CD8-positive, alpha-beta T cell (primary cell): ENCODE measurements at regions of chr9 and their contacts with region 1.

Region 1: GRCh38 chr9:37800631-37801286 is at the start of gene DCAF10:
- DNase-seq: peak; percentile 81 to 95 (median 88)
- ATAC-seq: peak; percentile 86
- H3K4me3 ChIP-seq: peak within 1 kb of the TSS; percentile 83 to 97
- H3K4me3 Mint-ChIP-seq: peak within 1 kb of the TSS; percentile 94
- H3K27ac ChIP-seq: peak within 1 kb of the TSS; percentile 69 to 77
- H3K27ac Mint-ChIP-seq: peak within 1 kb of the TSS; percentile 86
- H3K4me1 ChIP-seq: peaks cover 27% of the 10 kb centered on the region
- H3K4me1 Mint-ChIP-seq: peaks cover 40% of the 10 kb centered on the region
- H3K27me3 ChIP-seq: no peaks in the 10 kb centered on the region
- H3K27me3 Mint-ChIP-seq: no peaks in the 10 kb centered on the region
- CTCF ChIP-seq: no peak
- total RNA-seq, gene DCAF10: 4.9 to 5.6 TPM

Region 2: DNA sequence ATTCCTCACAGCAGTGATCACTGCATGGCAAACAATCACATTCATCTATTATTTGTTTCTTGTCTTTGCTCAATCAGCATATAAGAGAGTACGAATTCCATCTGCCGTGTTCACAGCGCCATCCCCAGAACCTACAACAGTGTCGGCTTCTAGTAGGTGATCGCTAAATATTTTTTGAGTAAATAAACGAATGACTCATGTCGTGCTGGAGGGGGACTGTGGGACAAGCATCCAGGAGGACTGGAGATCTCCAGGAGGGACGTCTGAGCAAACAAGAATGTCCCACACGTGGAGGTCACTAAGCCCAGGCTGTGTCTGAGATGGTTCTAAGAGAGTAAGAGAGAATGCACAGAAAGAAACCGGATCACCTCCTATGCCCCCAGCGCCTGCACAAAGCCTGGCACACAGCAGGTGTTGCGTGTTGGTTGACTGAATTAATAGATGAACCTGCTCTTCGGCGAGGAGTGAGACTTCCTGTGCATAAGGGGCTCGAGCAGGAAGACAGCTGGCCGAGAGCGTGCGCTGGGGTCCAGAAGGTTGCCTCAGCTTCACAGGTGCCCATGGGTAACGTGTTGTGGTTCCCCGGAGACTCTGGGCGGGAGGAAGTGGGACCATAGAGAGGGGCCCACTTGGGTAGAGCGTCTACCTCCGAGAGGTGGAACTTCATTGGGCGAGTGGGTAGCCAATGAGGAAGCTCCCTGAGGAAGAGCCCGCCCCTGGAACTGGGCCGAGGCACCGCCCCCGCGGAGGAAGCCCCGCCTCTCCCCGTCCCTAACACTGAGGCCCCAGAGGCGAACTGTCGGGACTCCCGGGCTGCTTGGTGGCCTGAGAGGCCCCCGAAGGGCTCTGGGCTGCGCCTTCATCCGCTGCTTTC is 1035.1 kb before region 1 on chr9:
- CTCF ChIA-PET with region 1: no interaction called
- POLR2A ChIA-PET with region 1: no interaction called
- intact Hi-C with region 1: loop called in 1 of 2 experiments (anchors 5 kb)
- DNase-seq: peak; percentile 68 to 95 (median 89)
- ATAC-seq: peak; percentile 99
- H3K4me3 ChIP-seq: peak overlapping the region; percentile 47 to 54
- H3K4me3 Mint-ChIP-seq: no peak overlapping the region
- H3K27ac ChIP-seq: peak overlapping the region; percentile 23 to 39
- H3K27ac Mint-ChIP-seq: peak overlapping the region; percentile 71
- H3K4me1 ChIP-seq: peaks cover 6% of the 10 kb centered on the region
- H3K4me1 Mint-ChIP-seq: peaks cover 6% of the 10 kb centered on the region
- H3K27me3 ChIP-seq: peaks cover 0 to 7% of the 10 kb centered on the region in 2 experiments
- H3K27me3 Mint-ChIP-seq: peaks cover 5% of the 10 kb centered on the region
- CTCF ChIP-seq: no peak

Region 3: GRCh38 chr9:37465249-37466036 is 335.3 kb before region 1 on chr9 and contains the start of gene ZBTB5:
- CTCF ChIA-PET with region 1: no interaction called
- POLR2A ChIA-PET with region 1: no interaction called
- intact Hi-C with region 1: loop called in 1 of 2 experiments (anchors 5 kb)
- DNase-seq: peak; percentile 97 to 100 (median 99)
- ATAC-seq: peak; percentile 79
- H3K4me3 ChIP-seq: peak within 1 kb of the TSS; percentile 91 to 97
- H3K4me3 Mint-ChIP-seq: peak within 1 kb of the TSS; percentile 95
- H3K27ac ChIP-seq: peak within 1 kb of the TSS; percentile 86 to 97
- H3K27ac Mint-ChIP-seq: peak within 1 kb of the TSS; percentile 98
- H3K4me1 ChIP-seq: peaks cover 23% of the 10 kb centered on the region
- H3K4me1 Mint-ChIP-seq: peaks cover 40% of the 10 kb centered on the region
- H3K27me3 ChIP-seq: no peaks in the 10 kb centered on the region
- H3K27me3 Mint-ChIP-seq: no peaks in the 10 kb centered on the region
- CTCF ChIP-seq: no peak
- total RNA-seq, gene ZBTB5: 18.5 to 18.7 TPM

Region 4: DNA sequence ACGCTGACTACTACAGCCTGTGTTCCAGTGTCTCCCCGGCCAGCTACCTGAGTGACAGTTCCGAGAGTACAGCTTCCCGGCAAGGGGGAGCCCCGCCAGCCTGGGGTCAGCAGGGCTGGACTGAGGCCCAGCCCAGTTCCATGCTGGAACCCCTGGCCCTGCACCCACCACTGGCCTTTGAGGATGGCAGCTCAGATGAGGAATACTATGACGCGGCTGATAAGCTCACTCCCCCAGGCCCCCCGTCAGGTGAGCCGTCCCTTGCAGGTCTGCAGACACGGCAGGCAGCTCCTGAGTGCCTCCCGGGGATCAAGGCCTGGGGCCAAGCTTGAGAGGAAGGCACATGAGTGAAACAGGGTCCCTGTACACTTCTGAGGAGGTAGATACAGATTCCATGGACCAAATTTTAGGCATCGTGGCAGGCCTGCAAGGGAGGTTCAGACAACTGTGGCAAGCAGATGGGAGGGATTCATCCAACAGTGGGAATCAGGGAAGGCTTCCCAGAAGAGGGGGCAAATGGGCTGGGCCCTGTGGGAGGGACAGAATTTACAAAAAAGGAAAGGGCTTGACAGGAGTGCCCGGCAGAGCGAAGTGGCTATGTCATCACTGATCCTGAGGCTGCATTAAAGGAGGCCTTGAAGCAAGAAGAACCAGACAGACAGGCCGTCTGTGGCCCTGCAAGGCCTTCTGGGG is 60.0 kb before region 1 on chr9:
- CTCF ChIA-PET with region 1: no interaction called
- POLR2A ChIA-PET with region 1: no interaction called
- intact Hi-C with region 1: no loop called
- DNase-seq: no peak
- ATAC-seq: no peak
- H3K4me3 ChIP-seq: no peak overlapping the region
- H3K4me3 Mint-ChIP-seq: no peak overlapping the region
- H3K27ac ChIP-seq: no peak overlapping the region
- H3K27ac Mint-ChIP-seq: no peak overlapping the region
- H3K4me1 ChIP-seq: no peaks in the 10 kb centered on the region
- H3K4me1 Mint-ChIP-seq: no peaks in the 10 kb centered on the region
- H3K27me3 ChIP-seq: no peaks in the 10 kb centered on the region
- H3K27me3 Mint-ChIP-seq: no peaks in the 10 kb centered on the region
- CTCF ChIP-seq: no peak

Region 5: DNA sequence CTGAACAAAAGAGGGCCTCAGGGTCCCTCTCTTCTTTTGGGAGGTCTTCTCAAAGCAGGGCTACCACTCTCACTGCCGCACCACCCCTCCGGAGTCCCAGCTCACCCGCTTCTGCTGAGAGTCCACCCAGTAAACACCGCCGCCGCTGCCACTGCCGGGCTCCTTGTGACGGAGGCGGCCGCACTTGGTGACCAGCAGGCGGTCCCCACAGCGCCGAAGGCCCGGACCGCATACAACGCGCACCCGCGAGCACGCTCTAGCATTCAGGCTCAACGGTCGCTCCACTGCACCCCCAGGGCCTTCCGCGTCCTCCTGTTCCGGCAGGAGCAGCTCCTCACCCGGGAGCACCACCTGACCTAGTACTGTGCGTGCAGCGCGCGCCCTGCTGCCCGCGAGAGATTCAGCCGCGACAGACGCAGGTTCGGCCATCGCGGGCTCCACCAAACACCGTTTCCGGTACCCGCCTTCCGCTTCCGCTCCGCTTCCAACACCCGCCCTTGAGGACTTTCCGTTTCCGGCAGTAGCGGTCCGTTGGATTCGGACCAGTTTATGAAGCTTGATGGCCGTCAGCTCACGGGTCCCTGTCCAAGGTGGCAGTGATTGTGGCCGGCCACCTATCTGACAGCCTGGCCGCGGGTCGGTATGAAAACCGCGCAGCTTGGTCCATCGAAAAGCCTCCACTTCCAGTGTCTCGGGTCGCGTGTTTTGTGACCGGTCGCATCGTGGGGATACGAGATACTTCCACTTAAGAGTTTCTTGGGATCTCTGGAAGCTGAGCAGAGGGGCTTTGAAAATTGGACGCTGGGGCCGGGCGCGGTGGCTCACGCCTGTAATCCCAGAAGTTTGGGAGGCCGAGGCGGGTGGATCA is 15.9 kb before region 1 on chr9 and contains the start of gene EXOSC3:
- CTCF ChIA-PET with region 1: interaction called, 3 read pairs
- POLR2A ChIA-PET with region 1: interaction called, 30 read pairs
- intact Hi-C with region 1: loop called (anchors 1 kb)
- DNase-seq: peak; percentile 58 to 92 (median 84)
- ATAC-seq: peak; percentile 83
- H3K4me3 ChIP-seq: peak within 1 kb of the TSS; percentile 98
- H3K4me3 Mint-ChIP-seq: peak within 1 kb of the TSS; percentile 97
- H3K27ac ChIP-seq: peak within 1 kb of the TSS; percentile 75 to 88
- H3K27ac Mint-ChIP-seq: peak within 1 kb of the TSS; percentile 96
- H3K4me1 ChIP-seq: peaks cover 24% of the 10 kb centered on the region
- H3K4me1 Mint-ChIP-seq: peaks cover 42% of the 10 kb centered on the region
- H3K27me3 ChIP-seq: no peaks in the 10 kb centered on the region
- H3K27me3 Mint-ChIP-seq: peaks cover 4% of the 10 kb centered on the region
- CTCF ChIP-seq: no peak
- total RNA-seq, gene EXOSC3: 34.2 to 45.9 TPM

Region 6: DNA sequence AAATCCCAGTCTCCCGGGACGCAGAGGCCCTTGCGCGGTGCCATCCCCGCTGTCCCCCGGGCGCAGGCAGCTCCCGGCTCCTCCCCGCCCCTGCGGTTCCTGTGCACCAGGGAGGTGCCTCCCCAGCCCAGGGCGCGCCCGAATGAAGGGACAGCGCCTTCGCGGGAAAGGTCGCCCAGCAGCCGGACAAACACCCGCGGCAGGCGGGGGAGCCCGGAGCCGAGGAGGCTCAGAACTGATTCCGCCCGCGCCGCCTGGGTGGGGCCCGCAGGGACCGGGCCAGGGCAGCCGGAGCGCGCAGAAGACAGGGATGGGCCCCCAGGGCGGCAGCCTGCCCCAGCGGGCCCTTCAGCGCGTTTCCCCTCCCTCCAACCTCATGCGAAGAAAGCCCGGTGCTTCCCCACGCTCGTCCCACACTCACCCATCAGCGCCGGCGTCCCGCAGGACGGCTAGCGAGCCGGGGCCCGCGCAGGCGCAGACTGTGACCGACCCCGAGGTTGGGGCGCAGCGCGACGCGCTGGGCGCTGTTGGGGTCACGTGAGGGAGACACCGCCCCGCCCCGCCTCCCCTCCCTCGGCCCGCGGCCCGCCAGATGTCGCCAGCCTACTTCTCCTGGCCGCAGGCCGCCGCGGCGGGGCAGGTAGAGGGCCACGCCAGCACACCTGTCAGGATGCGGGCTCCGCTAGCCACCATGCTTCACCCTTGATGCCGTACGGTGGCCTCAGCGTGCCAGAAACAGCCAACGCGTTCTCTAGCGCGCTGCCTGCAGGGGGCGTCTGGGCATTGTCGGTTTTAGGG is 103.1 kb after region 1 on chr9 and contains the start of gene SLC25A51:
- CTCF ChIA-PET with region 1: no interaction called
- POLR2A ChIA-PET with region 1: interaction called, 5 read pairs
- intact Hi-C with region 1: loop called (anchors 5 kb)
- DNase-seq: peak; percentile 94 to 99 (median 96)
- ATAC-seq: peak; percentile 87
- H3K4me3 ChIP-seq: peak within 1 kb of the TSS; percentile 65 to 89
- H3K4me3 Mint-ChIP-seq: peak within 1 kb of the TSS; percentile 91
- H3K27ac ChIP-seq: peak within 1 kb of the TSS; percentile 62 to 73
- H3K27ac Mint-ChIP-seq: peak within 1 kb of the TSS; percentile 94
- H3K4me1 ChIP-seq: peaks cover 22% of the 10 kb centered on the region
- H3K4me1 Mint-ChIP-seq: peaks cover 30% of the 10 kb centered on the region
- H3K27me3 ChIP-seq: no peaks in the 10 kb centered on the region
- H3K27me3 Mint-ChIP-seq: no peaks in the 10 kb centered on the region
- CTCF ChIP-seq: peak; percentile 86
- total RNA-seq, gene SLC25A51: 14.7 to 15.2 TPM

Region 7: DNA sequence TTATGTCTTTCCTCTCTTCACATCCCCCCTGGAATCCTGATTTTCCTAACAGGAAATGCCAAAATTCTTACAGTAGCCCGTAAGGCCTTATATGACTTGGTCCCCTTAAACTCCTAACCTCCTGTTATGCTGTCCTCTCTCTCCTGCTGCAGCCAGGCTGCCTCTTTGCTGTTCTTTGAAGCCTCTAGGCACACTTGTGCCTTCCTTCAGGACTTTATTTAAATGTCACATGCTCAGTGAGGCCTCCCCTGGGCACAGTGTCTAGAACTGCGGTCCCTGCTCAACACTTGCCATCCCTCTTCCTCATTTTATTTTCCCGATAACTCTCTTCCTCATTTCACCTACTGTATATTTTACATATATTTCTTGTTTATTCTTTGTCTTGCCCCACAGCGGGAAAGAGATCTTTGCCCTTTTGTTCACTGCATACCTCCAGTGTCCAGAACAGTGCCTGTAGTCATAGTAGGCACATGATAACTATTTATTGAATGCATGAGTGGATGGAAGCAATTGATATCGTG is 273.7 kb after region 1 on chr9:
- CTCF ChIA-PET with region 1: no interaction called
- POLR2A ChIA-PET with region 1: no interaction called
- intact Hi-C with region 1: loop called in 1 of 2 experiments (anchors 5 kb)
- DNase-seq: no peak
- ATAC-seq: no peak
- H3K4me3 ChIP-seq: no peak overlapping the region
- H3K4me3 Mint-ChIP-seq: no peak overlapping the region
- H3K27ac ChIP-seq: no peak overlapping the region
- H3K27ac Mint-ChIP-seq: no peak overlapping the region
- H3K4me1 ChIP-seq: peaks cover 13% of the 10 kb centered on the region
- H3K4me1 Mint-ChIP-seq: peaks cover 16% of the 10 kb centered on the region
- H3K27me3 ChIP-seq: no peaks in the 10 kb centered on the region
- H3K27me3 Mint-ChIP-seq: peaks cover 11% of the 10 kb centered on the region
- CTCF ChIP-seq: no peak